Endothelial cell of umbilical vein (primary cell): ENCODE measurements at regions of chr1 and their contacts with region 1.

Region 1: GRCh38 chr1:165392634-165393571 is 36.4 kb upstream of the LMX1A start:
- DNase-seq: peak; percentile 67
- H3K4me3 ChIP-seq: no peak overlapping the region
- H3K27ac ChIP-seq: no peak overlapping the region
- H3K4me1 ChIP-seq: peaks cover 8% of the 10 kb centered on the region
- H3K27me3 ChIP-seq: peaks cover 19 to 32% of the 10 kb centered on the region in 2 experiments
- CTCF ChIP-seq: peak; percentile 90 to 92
- POLR2A ChIP-seq: no peak

Region 2: GRCh38 chr1:165240492-165240891 is 152.4 kb before region 1 on chr1:
- CTCF ChIA-PET with region 1: no interaction called
- POLR2A ChIA-PET with region 1: no interaction called
- dilution Hi-C with region 1: no loop called
- intact Hi-C with region 1: no loop called
- DNase-seq: no peak
- H3K4me3 ChIP-seq: no peak overlapping the region
- H3K27ac ChIP-seq: no peak overlapping the region
- H3K4me1 ChIP-seq: no peaks in the 10 kb centered on the region
- H3K27me3 ChIP-seq: peaks cover 5 to 14% of the 10 kb centered on the region in 2 experiments
- CTCF ChIP-seq: no peak
- POLR2A ChIP-seq: no peak

Region 3: DNA sequence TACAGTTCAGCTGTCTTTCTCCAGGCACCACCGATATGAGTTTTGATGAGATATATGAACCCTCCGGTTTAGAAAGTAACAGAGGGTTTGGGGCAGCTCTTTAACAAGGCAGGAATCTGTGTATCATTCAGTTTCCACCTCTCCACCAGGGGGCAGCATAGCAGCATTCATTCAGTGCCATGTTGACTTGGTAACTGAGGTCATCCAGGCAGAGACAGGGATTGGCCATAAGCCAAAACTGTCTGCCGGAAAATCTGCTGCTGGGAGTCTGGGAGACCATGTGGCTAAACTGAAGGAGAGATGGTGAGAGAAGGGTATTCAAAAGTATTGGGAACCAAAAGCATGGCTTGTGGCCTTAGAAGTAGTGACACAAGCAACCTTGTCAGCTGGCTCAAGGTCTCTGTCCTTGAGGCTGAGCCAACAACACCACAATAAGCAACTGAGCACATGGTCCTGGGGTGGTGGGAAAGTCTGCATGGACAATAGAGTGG is 134.9 kb before region 1 on chr1:
- CTCF ChIA-PET with region 1: interaction called, 7 read pairs
- POLR2A ChIA-PET with region 1: no interaction called
- dilution Hi-C with region 1: no loop called
- intact Hi-C with region 1: loop called (anchors 1 kb)
- DNase-seq: peak; percentile 56
- H3K4me3 ChIP-seq: no peak overlapping the region
- H3K27ac ChIP-seq: no peak overlapping the region
- H3K4me1 ChIP-seq: no peaks in the 10 kb centered on the region
- H3K27me3 ChIP-seq: no peaks in the 10 kb centered on the region
- CTCF ChIP-seq: peak; percentile 69 to 71
- POLR2A ChIP-seq: no peak

Region 4: GRCh38 chr1:165376041-165376810 is 16.7 kb before region 1 on chr1:
- CTCF ChIA-PET with region 1: interaction called, 23 read pairs
- POLR2A ChIA-PET with region 1: no interaction called
- dilution Hi-C with region 1: no loop called
- intact Hi-C with region 1: no loop called
- DNase-seq: peak; percentile 81
- H3K4me3 ChIP-seq: peak overlapping the region; percentile 19 to 60 (median 24)
- H3K27ac ChIP-seq: no peak overlapping the region
- H3K4me1 ChIP-seq: peaks cover 9% of the 10 kb centered on the region
- H3K27me3 ChIP-seq: peaks cover 0 to 5% of the 10 kb centered on the region in 2 experiments
- CTCF ChIP-seq: no peak
- POLR2A ChIP-seq: no peak

Region 5: GRCh38 chr1:165403835-165404482 is 11.1 kb after region 1 on chr1:
- CTCF ChIA-PET with region 1: interaction called, 20 read pairs
- POLR2A ChIA-PET with region 1: no interaction called
- dilution Hi-C with region 1: no loop called
- intact Hi-C with region 1: loop called (anchors 1 kb)
- DNase-seq: peak; percentile 15
- H3K4me3 ChIP-seq: no peak overlapping the region
- H3K27ac ChIP-seq: no peak overlapping the region
- H3K4me1 ChIP-seq: no peaks in the 10 kb centered on the region
- H3K27me3 ChIP-seq: peaks cover 0 to 2% of the 10 kb centered on the region in 2 experiments
- CTCF ChIP-seq: peak; percentile 32 to 61
- POLR2A ChIP-seq: no peak

Region 6: GRCh38 chr1:165409657-165410358 is 16.9 kb after region 1 on chr1:
- CTCF ChIA-PET with region 1: interaction called, 20 read pairs
- POLR2A ChIA-PET with region 1: no interaction called
- dilution Hi-C with region 1: no loop called
- intact Hi-C with region 1: loop called (anchors 1 kb)
- DNase-seq: no peak
- H3K4me3 ChIP-seq: no peak overlapping the region
- H3K27ac ChIP-seq: no peak overlapping the region
- H3K4me1 ChIP-seq: no peaks in the 10 kb centered on the region
- H3K27me3 ChIP-seq: peaks cover 2 to 5% of the 10 kb centered on the region in 2 experiments
- CTCF ChIP-seq: no peak
- POLR2A ChIP-seq: no peak